ENCODE measurements at regions of chr6 and their contacts with region 1.

Region 1: DNA sequence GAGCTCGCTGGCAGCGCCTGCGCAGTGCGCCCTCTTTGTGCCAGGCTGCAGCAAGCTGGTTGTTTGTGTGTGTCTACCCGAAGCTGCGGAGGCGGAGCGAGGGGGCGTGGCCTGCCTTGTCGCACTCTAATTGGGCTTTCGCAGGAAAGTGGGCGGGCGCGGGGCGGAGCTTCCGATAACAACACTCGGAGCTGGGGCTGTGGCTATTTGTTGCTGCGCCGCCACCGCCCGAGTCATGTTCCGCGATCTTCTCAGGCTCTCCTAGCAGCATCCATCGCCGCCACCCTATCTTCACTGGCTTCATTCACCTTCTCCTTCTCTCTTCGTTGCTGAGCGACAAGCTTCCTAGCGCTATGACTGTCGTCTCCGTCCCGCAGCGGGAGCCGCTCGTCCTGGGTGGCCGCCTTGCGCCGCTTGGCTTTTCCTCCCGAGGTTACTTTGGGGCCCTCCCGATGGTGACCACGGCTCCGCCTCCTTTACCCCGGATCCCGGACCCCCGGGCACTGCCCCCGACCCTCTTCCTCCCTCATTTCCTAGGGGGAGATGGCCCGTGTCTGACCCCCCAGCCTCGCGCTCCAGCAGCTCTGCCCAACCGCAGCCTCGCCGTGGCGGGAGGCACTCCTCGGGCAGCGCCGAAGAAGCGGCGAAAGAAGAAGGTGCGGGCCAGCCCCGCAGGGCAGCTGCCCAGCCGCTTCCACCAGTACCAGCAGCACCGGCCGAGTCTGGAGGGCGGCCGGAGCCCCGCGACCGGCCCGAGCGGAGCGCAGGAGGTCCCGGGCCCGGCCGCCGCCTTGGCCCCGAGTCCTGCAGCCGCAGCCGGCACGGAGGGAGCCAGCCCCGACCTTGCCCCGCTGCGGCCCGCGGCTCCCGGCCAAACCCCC is at the start of gene PNRC1:
- DNase-seq: peak; percentile 99
- H3K4me3 ChIP-seq: peak within 1 kb of the TSS; percentile 89 to 97 (median 94)
- H3K27ac ChIP-seq: peak within 1 kb of the TSS; percentile 92
- H3K4me1 ChIP-seq: peaks cover 11% of the 10 kb centered on the region
- H3K27me3 ChIP-seq: no peaks in the 10 kb centered on the region
- CTCF ChIP-seq: no peak
- POLR2A ChIP-seq: peak; percentile 91
- total RNA-seq, gene PNRC1: 87.9 and 88.4 TPM in 2 replicates

Region 2: GRCh38 chr6:87154993-87155841 is 1925.6 kb before region 1 on chr6 and contains the start of gene ZNF292:
- CTCF ChIA-PET with region 1: no interaction called
- POLR2A ChIA-PET with region 1: no interaction called
- dilution Hi-C with region 1: no loop called
- intact Hi-C with region 1: loop called (anchors 10 kb)
- DNase-seq: peak; percentile 98
- H3K4me3 ChIP-seq: peak within 1 kb of the TSS; percentile 60 to 91 (median 89)
- H3K27ac ChIP-seq: peak within 1 kb of the TSS; percentile 96
- H3K4me1 ChIP-seq: peaks cover 35% of the 10 kb centered on the region
- H3K27me3 ChIP-seq: no peaks in the 10 kb centered on the region
- CTCF ChIP-seq: no peak
- POLR2A ChIP-seq: no peak
- total RNA-seq, gene ZNF292: 23.8 and 24.9 TPM in 2 replicates

Region 3: GRCh38 chr6:89122625-89123024 is 41.8 kb after region 1 on chr6:
- CTCF ChIA-PET with region 1: interaction called, 3 read pairs
- POLR2A ChIA-PET with region 1: interaction called, 3 read pairs
- dilution Hi-C with region 1: no loop called
- intact Hi-C with region 1: loop called (anchors 2 kb)
- DNase-seq: peak; percentile 52
- H3K4me3 ChIP-seq: no peak overlapping the region
- H3K27ac ChIP-seq: no peak overlapping the region
- H3K4me1 ChIP-seq: peaks cover 2% of the 10 kb centered on the region
- H3K27me3 ChIP-seq: peaks cover 6 to 18% of the 10 kb centered on the region in 2 experiments
- CTCF ChIP-seq: peak in 1 of 2 donors; percentile 31
- POLR2A ChIP-seq: no peak

Region 4: DNA sequence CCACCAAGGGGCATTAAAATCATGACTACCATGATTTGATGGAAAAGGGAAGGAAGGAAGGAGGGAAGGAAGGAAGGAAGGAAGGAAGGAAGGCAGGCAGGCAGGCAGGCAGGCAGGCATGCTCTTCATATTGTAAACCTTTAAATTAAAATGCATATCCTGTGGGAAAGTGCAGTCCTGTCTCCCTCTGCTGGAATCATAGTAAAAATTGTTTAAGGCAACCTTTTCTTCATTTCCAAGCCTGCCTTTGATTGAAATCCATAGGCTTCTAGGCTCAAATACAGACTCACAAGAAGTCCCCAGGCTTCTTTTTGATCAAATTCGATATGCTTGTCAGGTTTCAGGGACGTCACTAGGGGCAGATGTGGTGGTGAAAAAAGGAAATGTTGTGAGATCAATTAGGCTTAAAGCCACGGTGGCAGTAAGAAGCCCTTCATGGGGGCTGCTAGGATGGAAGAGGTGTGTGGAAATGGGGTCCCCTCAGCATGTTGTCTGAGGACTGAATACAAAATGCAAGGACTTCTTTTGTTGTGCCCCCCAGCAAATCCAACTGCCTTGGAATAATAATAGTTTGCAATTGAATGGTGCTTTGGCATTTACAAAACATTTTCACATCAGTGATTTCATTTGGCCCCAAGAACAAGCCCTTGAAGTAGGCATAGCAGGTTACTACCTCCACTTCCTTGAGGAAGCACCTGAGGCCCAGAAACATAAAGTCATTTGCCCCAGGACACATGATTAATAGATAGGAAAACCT is 162.0 kb after region 1 on chr6:
- CTCF ChIA-PET with region 1: interaction called, 4 read pairs
- POLR2A ChIA-PET with region 1: no interaction called
- dilution Hi-C with region 1: no loop called
- intact Hi-C with region 1: loop called (anchors 1 kb)
- DNase-seq: peak; percentile 60
- H3K4me3 ChIP-seq: no peak overlapping the region
- H3K27ac ChIP-seq: no peak overlapping the region
- H3K4me1 ChIP-seq: no peaks in the 10 kb centered on the region
- H3K27me3 ChIP-seq: peaks cover 16 to 23% of the 10 kb centered on the region in 2 experiments
- CTCF ChIP-seq: peak; percentile 36 to 43
- POLR2A ChIP-seq: no peak

Region 5: GRCh38 chr6:89371849-89372505 is 291.2 kb after region 1 on chr6:
- CTCF ChIA-PET with region 1: interaction called, 4 read pairs
- POLR2A ChIA-PET with region 1: no interaction called
- dilution Hi-C with region 1: no loop called
- intact Hi-C with region 1: loop called (anchors 2 kb)
- DNase-seq: peak; percentile 61
- H3K4me3 ChIP-seq: no peak overlapping the region
- H3K27ac ChIP-seq: no peak overlapping the region
- H3K4me1 ChIP-seq: peaks cover 3% of the 10 kb centered on the region
- H3K27me3 ChIP-seq: no peaks in the 10 kb centered on the region
- CTCF ChIP-seq: peak; percentile 96 to 98
- POLR2A ChIP-seq: no peak